ENCODE measurements at regions of chr1 and their contacts with region 1.

Region 1: DNA sequence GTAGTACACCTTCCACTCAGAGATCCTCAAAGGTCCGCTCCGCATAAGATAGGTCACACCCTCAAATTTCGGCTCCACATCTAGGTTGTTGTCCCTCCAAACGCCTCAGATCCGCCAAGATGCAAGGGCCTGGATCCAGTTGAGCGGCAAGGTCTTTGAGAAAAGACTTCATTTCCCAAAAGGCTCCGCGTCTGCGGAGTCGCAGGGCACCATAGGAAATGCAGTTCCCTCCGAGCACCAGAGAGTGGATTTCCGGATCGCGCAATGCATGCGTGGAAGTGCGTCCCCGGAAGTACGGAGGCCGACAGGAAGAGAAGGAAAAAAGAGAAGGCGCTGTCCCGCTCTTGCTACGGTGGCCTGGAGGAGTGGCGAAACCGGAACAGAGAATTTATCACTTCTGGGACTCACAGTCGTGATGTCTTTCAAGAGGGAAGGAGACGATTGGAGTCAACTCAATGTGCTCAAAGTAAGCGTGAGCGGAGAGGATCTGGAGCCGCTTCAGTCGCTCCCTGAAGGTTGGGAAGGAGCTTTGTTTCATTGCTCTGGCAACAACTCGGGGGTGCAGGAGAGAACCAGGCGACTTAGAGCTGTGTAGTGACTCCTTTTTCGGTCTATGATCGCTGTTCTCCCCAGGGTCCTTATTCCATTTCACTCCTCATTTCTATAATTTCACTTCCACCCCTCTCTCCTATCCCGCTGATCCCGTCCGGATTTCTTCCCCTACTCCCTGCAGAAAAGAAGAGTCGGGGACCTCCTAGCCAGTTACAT is at the starts of genes LYSMD1 and SCNM1:
- DNase-seq: peak; percentile 94 to 96
- H3K4me3 ChIP-seq: peak within 1 kb of the TSS; percentile 64
- H3K27ac ChIP-seq: peak within 1 kb of the TSS; percentile 66
- H3K4me1 ChIP-seq: peaks cover 15% of the 10 kb centered on the region; the same call in 1 of the 2 replicates
- H3K27me3 ChIP-seq: no peaks in the 10 kb centered on the region
- CTCF ChIP-seq: no peak
- total RNA-seq, gene LYSMD1: 7.6 and 12.8 TPM in 2 replicates
- total RNA-seq, gene SCNM1: 42.5 and 47.7 TPM in 2 replicates

Region 2: DNA sequence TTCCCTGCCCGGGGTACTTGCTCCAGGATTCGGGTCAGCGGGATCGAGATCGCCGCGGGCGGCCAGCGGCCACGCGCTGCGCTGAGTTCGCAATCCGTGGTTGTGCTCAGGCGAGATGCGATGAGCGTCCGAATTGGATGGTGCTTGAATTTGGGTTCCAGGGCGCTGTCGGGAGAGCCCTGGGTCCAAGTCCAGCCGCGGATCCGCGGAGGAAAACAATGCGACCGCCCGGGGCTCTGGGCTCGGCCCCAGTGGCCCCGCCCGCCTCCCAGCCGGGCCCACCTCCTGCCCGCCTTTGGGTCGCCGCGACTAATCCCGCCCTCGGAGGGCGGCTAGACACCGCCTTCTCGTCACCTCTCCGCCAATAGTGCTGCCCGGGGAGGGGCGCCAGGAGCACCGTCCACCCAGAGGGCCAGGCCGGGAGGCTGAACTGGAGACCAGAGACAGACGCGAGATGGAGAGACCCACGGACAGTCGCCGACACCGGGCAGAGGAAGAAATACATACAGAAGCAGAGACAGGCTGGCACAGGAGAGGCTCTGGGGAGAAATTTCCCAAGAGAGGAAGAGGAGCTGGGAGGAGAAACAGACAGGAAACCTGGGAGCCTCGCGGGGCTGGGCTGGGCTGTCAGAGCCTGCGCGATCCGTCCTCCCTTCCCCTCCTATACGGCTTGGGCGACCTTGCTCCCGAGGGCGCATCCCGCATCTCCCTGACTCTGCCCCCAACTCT is 19.3 kb before region 1 on chr1 and contains the start of gene SEMA6C:
- CTCF ChIA-PET with region 1: no interaction called
- POLR2A ChIA-PET with region 1: interaction called, 3 read pairs
- intact Hi-C with region 1: loop called (anchors 1 kb)
- DNase-seq: peak; percentile 75 to 94
- H3K4me3 ChIP-seq: peak within 1 kb of the TSS; percentile 78
- H3K27ac ChIP-seq: no peak within 1 kb of the TSS
- H3K4me1 ChIP-seq: peaks cover 5% of the 10 kb centered on the region
- H3K27me3 ChIP-seq: no peaks in the 10 kb centered on the region
- CTCF ChIP-seq: no peak
- total RNA-seq, gene SEMA6C: 5.6 and 6.1 TPM in 2 replicates

Region 3: GRCh38 chr1:151189638-151190445 is 23.9 kb after region 1 on chr1 and contains the start of gene VPS72:
- CTCF ChIA-PET with region 1: interaction called, 3 read pairs
- POLR2A ChIA-PET with region 1: interaction called, 10 read pairs
- intact Hi-C with region 1: no loop called
- DNase-seq: peak; percentile 80
- H3K4me3 ChIP-seq: peak within 1 kb of the TSS; percentile 71
- H3K27ac ChIP-seq: peak within 1 kb of the TSS; percentile 72
- H3K4me1 ChIP-seq: peaks cover 26% of the 10 kb centered on the region
- H3K27me3 ChIP-seq: no peaks in the 10 kb centered on the region
- CTCF ChIP-seq: no peak; the same call in 1 of the 2 replicates
- total RNA-seq, gene VPS72: 63.9 and 72.5 TPM in 2 replicates

Region 4: GRCh38 chr1:151265446-151266236 is 99.7 kb after region 1 on chr1:
- CTCF ChIA-PET with region 1: no interaction called
- POLR2A ChIA-PET with region 1: no interaction called
- intact Hi-C with region 1: no loop called
- DNase-seq: no peak
- H3K4me3 ChIP-seq: no peak overlapping the region
- H3K27ac ChIP-seq: no peak overlapping the region
- H3K4me1 ChIP-seq: no peaks in the 10 kb centered on the region
- H3K27me3 ChIP-seq: no peaks in the 10 kb centered on the region
- CTCF ChIP-seq: no peak

Measured in PC-9 (cell line).